ENCODE measurements at regions of chr3 and their contacts with region 1.

Region 1: DNA sequence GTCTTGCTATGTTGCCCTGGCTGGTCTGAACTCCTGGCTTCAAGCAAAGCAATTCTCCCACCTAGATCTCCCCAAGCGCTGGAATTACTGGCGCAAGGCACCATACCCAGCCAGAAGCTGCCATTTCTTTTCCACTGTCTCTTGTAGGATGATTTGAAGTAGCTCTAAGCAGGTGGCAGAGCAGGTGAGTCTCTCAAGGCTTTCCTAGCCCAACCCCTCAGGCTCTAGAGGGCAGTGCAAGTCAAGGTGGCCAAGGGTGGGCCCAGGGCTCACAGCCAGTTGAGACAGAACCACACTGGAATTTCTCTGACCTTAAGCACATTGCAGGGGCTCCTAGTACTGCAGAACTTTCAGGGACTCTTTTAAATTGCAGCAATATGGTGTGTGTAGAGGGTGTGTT is 15.6 kb upstream of the DAG1 start:
- DNase-seq: no peak
- ATAC-seq: peak; percentile 73
- H3K4me3 ChIP-seq: no peak overlapping the region
- H3K27ac ChIP-seq: no peak overlapping the region
- H3K4me1 ChIP-seq: no peaks in the 10 kb centered on the region
- H3K27me3 ChIP-seq: no peaks in the 10 kb centered on the region
- CTCF ChIP-seq: peak; percentile 36 to 49 (median 43); a peak in 5 of 6 replicates
- EP300 ChIP-seq: no peak
- POLR2A ChIP-seq: no peak
- RAD21 ChIP-seq: peak; percentile 60

Region 2: DNA sequence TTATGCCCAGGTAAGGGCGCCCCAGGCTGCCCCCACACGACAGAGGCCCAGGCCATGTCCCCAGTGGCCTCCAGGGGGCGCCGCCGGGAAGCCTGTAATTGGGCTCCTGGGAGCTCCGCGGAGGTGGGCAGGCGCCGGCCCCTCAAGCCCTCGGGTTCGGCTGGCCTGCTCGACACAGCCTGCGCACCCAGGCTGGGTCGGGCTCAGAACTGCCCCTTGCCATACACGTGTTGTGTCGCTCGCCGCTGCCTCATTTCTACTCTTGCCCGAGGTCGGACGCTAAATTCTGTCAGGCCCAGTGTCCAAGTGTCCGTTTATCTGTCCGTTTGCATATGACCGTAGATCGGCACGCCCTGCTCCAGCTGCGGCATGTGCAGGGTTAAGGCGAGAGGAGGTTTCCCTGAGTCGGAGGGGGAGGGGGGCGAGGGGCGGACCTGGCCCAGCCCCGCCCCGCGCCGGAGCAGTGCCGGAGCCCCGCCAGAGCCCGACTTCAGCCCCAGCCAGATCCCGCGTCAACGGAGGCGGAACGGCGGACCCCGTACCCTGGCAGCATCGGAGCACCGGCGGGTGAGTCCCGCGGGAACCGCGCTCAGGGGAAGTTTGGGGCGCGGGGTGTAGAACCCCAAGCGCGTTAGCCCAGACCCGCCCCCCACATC is 283.2 kb before region 1 on chr3 and contains the start of gene KLHDC8B:
- CTCF ChIA-PET with region 1: interaction called, 59 read pairs
- POLR2A ChIA-PET with region 1: interaction called, 6 read pairs
- RAD21 ChIA-PET with region 1: interaction called, 17 read pairs
- SMC1A ChIA-PET with region 1: interaction called, 14 read pairs
- in situ Hi-C with region 1: loop called (anchors 5 kb)
- intact Hi-C with region 1: loop called (anchors 1 kb)
- DNase-seq: peak; percentile 12
- ATAC-seq: peak; percentile 90
- H3K4me3 ChIP-seq: peak within 1 kb of the TSS; percentile 74
- H3K27ac ChIP-seq: no peak within 1 kb of the TSS
- H3K4me1 ChIP-seq: peaks cover 5% of the 10 kb centered on the region
- H3K27me3 ChIP-seq: no peaks in the 10 kb centered on the region
- CTCF ChIP-seq: peak; percentile 93 to 96 (median 96)
- EP300 ChIP-seq: no peak
- POLR2A ChIP-seq: peak; percentile 53
- RAD21 ChIP-seq: peak; percentile 69
- polyA plus RNA-seq, gene KLHDC8B: 0.40 TPM in 1 of 2 experiments, not detected in the other

Region 3: GRCh38 chr3:49295489-49296058 is 158.9 kb before region 1 on chr3:
- CTCF ChIA-PET with region 1: interaction called, 9 read pairs
- POLR2A ChIA-PET with region 1: no interaction called
- RAD21 ChIA-PET with region 1: interaction called, 5 read pairs
- SMC1A ChIA-PET with region 1: interaction called, 7 read pairs
- in situ Hi-C with region 1: no loop called
- intact Hi-C with region 1: loop called (anchors 1 kb)
- DNase-seq: no peak
- ATAC-seq: peak; percentile 47; the same call in 2 of the 3 replicates
- H3K4me3 ChIP-seq: no peak overlapping the region
- H3K27ac ChIP-seq: no peak overlapping the region
- H3K4me1 ChIP-seq: no peaks in the 10 kb centered on the region; the same call in 1 of the 2 replicates
- H3K27me3 ChIP-seq: no peaks in the 10 kb centered on the region
- CTCF ChIP-seq: peak; percentile 51 to 54 (median 52); a peak in 5 of 6 replicates
- EP300 ChIP-seq: no peak
- POLR2A ChIP-seq: no peak
- RAD21 ChIP-seq: peak; percentile 57

Region 4: GRCh38 chr3:49351521-49352011 is 102.9 kb before region 1 on chr3:
- CTCF ChIA-PET with region 1: interaction called, 11 read pairs
- POLR2A ChIA-PET with region 1: no interaction called
- RAD21 ChIA-PET with region 1: interaction called, 6 read pairs
- SMC1A ChIA-PET with region 1: no interaction called
- in situ Hi-C with region 1: loop called (anchors 5 kb)
- intact Hi-C with region 1: no loop called
- DNase-seq: no peak
- ATAC-seq: peak; percentile 45
- H3K4me3 ChIP-seq: no peak overlapping the region
- H3K27ac ChIP-seq: peak overlapping the region; percentile 38; the same call in 1 of the 2 replicates
- H3K4me1 ChIP-seq: peaks cover 27% of the 10 kb centered on the region
- H3K27me3 ChIP-seq: no peaks in the 10 kb centered on the region
- CTCF ChIP-seq: no peak
- EP300 ChIP-seq: no peak
- POLR2A ChIP-seq: no peak
- RAD21 ChIP-seq: no peak

Region 5: GRCh38 chr3:49411968-49412631 is 42.4 kb before region 1 on chr3 and contains the starts of genes RHOA and TCTA:
- CTCF ChIA-PET with region 1: interaction called, 30 read pairs
- POLR2A ChIA-PET with region 1: interaction called, 3 read pairs
- RAD21 ChIA-PET with region 1: interaction called, 35 read pairs
- SMC1A ChIA-PET with region 1: interaction called, 31 read pairs
- in situ Hi-C with region 1: no loop called
- intact Hi-C with region 1: loop called (anchors 1 kb)
- DNase-seq: peak; percentile 99
- ATAC-seq: peak; percentile 88
- H3K4me3 ChIP-seq: peak within 1 kb of the TSS; percentile 93
- H3K27ac ChIP-seq: peak within 1 kb of the TSS; percentile 96
- H3K4me1 ChIP-seq: peaks cover 31% of the 10 kb centered on the region
- H3K27me3 ChIP-seq: no peaks in the 10 kb centered on the region
- CTCF ChIP-seq: no peak
- EP300 ChIP-seq: no peak
- POLR2A ChIP-seq: peak; percentile 96
- RAD21 ChIP-seq: no peak
- polyA plus RNA-seq, gene RHOA: 696 to 1,049 TPM
- polyA plus RNA-seq, gene TCTA: 6.5 to 7.1 TPM

Region 6: DNA sequence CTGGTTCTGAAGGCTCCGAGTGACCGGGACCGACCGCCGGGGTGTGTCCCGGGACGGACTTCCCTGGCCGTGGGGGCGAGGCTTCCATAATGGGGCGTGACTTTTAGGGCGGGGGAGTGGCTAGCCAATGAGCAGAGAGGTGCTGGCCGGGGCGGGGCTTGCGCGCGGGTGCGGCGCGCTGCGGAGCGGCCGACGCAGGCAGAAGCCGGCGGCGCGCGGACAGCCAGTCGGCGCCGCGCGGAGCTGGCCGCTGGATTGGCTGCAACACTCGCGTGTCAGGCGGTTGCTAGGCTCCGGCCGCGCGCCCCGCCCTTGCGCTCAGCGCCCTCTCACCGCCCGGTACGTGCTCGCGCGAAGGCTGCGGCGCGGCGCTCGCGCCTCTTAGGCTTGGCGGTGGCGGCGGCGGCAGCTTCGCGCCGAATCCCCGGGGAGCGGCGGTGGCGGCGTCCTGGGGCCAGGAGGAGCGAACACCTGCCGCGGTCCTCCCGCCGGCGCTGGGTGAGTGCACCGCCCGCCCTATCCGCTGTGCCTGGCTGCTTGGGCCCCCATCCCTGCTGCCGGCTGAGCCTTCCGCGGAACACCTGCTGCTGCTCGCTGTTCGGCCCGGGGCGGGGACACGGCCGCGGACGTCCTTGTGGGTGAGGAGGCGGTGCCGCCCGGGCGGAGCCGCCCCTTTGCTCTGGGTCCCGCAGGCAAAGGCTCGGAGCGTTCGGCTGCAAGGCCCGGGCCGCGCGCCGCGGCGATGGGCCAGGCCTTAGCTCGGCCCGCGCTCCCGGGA is 15.7 kb after region 1 on chr3 and contains the start of gene DAG1:
- CTCF ChIA-PET with region 1: interaction called, 12 read pairs
- POLR2A ChIA-PET with region 1: interaction called, 6 read pairs
- RAD21 ChIA-PET with region 1: interaction called, 5 read pairs
- SMC1A ChIA-PET with region 1: no interaction called
- in situ Hi-C with region 1: no loop called
- intact Hi-C with region 1: no loop called
- DNase-seq: peak; percentile 75
- ATAC-seq: peak; percentile 94
- H3K4me3 ChIP-seq: peak within 1 kb of the TSS; percentile 91
- H3K27ac ChIP-seq: peak within 1 kb of the TSS; percentile 95
- H3K4me1 ChIP-seq: peaks cover 17% of the 10 kb centered on the region
- H3K27me3 ChIP-seq: no peaks in the 10 kb centered on the region
- CTCF ChIP-seq: no peak
- EP300 ChIP-seq: 0 out of 4 replicates have a peak, but pooled peaks of 1 of the 2 experiments have one; percentile 15
- POLR2A ChIP-seq: peak; percentile 90
- RAD21 ChIP-seq: no peak
- polyA plus RNA-seq, gene DAG1: 0.33 to 0.37 TPM

Region 7: DNA sequence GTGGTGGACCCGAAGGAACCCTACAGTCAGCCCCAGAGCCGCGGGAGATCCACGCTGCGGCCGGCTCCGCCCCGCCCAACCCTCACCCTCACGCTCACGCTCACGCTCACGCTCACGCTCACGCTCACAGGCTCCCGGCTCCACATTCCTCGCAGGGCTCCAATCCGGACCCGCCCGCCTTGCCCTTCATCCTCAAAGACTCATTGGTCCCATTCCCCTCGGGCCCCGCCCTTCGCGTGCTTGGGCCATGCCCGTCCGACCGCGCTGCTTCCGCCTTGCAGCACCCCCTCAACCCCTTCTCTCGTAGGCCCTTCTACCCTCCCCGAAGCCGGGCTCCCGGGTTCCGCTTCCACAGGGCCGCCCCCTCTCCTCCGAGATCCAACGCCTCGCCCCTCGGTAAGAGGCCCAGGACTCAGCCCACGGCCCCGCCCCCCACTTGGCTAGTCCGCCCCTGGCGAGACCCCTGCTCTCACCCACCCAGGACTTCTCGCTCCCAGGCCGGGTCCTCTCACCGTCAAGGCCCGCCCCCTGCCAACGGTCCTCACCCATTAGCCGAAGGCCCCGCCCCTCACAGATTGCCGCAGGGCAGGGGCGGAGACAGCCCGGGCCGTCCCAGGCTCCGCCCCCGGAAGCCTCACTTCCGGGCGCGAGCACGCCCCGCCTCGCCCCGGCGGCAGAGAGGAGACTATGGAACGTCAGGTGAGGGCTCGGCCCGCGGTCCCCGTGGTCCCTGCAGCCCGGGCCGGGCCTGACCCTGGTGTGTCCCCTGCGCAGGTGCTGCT is 219.4 kb after region 1 on chr3 and contains the start of gene APEH:
- CTCF ChIA-PET with region 1: interaction called, 5 read pairs
- POLR2A ChIA-PET with region 1: interaction called, 4 read pairs
- RAD21 ChIA-PET with region 1: interaction called, 3 read pairs
- SMC1A ChIA-PET with region 1: no interaction called
- in situ Hi-C with region 1: no loop called
- intact Hi-C with region 1: loop called (anchors 5 kb)
- DNase-seq: peak; percentile 95
- ATAC-seq: peak; percentile 91
- H3K4me3 ChIP-seq: peak within 1 kb of the TSS; percentile 94
- H3K27ac ChIP-seq: peak within 1 kb of the TSS; percentile 86
- H3K4me1 ChIP-seq: peaks cover 10% of the 10 kb centered on the region
- H3K27me3 ChIP-seq: no peaks in the 10 kb centered on the region
- CTCF ChIP-seq: no peak
- EP300 ChIP-seq: no peak; a peak in 1 of 4 replicates
- POLR2A ChIP-seq: peak; percentile 90
- RAD21 ChIP-seq: no peak
- polyA plus RNA-seq, gene APEH: 74.4 to 102 TPM

Measured in GM12878 (cell line).